ENCODE measurements at regions of chr2 and their contacts with region 1.

Region 1: DNA sequence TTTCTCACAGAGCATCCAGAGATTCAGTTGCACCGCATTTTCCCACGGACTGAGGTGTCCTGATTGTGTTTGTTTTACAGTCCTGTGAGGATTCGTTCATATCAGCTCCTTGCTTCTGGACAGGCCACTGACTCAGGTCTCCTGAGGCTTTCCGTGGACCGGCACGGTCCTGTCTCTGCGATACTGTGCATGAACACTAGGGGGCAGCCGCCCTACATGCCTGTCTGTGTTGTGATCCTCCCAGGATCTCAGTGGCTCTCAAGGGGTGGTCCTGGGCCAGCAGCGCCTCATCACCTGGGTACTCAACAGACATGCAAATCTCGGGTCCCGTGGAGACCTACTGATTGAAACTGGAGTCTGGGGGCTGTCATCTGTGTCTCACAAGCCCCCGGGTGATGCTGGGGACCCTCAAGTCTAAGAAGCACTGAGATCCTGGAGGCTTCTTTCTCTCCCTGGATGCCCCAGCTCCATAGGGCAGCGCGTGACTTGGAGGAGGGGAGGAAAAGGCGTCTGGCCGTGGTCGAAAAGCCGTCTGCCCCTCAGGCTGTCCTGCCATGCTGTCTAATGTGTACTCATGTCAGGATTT is 28.9 kb downstream of the IL1R2 start:
- DNase-seq: peak; percentile 72
- CTCF ChIP-seq: peak; percentile 99

Region 2: GRCh38 chr2:101987832-101988231 is 32.9 kb before region 1 on chr2:
- CTCF ChIA-PET with region 1: no interaction called
- POLR2A ChIA-PET with region 1: no interaction called
- DNase-seq: no peak
- CTCF ChIP-seq: no peak

Region 3: GRCh38 chr2:101998896-101999789 is 21.5 kb before region 1 on chr2:
- CTCF ChIA-PET with region 1: interaction called, 22 read pairs
- POLR2A ChIA-PET with region 1: no interaction called
- DNase-seq: no peak
- CTCF ChIP-seq: peak; percentile 6

Region 4: DNA sequence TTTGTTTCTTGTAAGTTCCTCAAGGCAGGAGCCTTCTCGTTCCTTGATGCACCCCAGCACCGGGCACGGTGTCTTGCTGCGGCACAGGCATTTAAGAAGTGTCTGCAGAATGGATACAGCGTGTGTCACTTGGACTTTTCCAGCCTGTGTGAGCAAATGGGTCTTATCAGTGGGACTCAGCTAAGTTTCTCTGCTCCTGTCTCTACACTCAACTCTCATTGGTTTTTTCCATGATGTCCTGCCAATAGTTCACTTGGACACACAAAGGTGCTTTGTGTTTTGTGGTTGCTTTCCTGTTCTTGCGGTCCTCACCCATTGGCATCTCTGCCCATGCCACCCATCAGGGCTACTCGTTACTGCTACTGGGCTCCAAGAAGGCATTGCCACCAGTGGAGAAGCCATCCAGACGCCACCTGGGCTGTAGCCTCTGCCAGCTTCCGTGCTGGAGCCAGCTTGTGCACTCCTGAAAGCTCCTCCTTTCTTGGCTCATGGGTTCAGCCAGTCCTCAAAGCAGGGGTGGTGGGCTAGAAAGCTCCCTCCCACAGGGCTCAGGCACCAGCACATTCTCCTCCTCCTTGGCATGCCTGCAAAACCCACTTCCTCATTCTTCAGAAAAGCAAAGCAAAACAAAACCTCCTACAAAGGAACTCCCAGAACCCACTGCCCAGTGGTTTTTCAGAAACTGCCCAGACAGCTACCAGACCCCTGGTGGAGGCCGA is 12.5 kb after region 1 on chr2:
- CTCF ChIA-PET with region 1: interaction called, 11 read pairs
- POLR2A ChIA-PET with region 1: no interaction called
- DNase-seq: peak; percentile 22
- CTCF ChIP-seq: no peak

Measured in GM10248 (cell line).